CD4-positive, alpha-beta T cell (primary cell): ENCODE measurements at regions of chr2 and their contacts with region 1.

Region 1: DNA sequence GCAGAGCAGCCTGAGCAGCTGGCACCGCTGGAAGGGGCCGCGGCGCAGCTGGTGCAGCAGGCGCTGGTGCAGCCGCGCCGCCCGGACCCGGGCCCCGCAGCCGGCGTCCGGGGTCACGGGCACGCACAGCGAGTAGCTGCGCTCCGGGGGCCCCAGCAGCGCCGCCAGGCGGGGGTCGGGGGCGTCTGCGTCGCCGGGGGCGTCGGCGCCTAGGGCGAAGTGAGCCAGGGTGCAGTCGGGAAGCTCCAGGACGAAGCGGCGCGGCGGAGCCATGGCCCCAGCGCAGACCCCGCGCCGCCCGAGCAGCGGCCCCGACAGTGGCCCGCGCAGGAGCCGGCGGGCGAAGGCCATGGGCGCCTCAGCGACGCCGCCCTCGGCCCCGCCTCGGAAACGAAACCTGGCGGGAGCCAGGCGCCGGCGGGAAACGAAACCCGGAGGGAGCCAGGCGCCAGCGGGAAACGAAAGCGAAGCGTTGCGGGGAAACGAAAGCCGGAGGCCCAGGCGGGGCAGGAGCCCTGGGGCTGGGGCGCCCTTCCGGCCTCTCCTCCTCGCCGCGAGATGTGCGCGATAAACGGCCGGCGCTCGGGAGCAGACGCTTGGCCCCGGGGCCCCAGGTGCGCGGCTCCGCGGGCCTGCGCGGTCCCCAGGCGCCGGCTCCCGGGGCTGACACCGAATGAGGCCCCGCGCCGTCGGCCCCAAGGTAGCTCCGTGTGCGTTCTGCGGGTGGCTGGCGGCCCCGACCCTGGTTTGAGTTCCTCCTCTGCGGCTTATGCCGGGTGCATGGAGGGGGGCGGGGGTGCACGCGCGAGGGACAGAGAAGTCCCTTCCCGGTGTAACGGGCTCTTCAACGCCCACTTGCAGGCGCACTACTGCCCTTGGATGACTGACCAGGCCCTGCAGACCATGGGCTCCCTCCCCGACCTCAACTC is at the start of gene CMPK2:
- DNase-seq: peak; percentile 60 to 97 (median 74)
- ATAC-seq: peak; percentile 74
- H3K4me3 ChIP-seq: peak within 1 kb of the TSS; percentile 93
- H3K4me3 Mint-ChIP-seq: peak within 1 kb of the TSS; percentile 96
- H3K27ac ChIP-seq: peak within 1 kb of the TSS in 1 of 2 donors; percentile 46
- H3K27ac Mint-ChIP-seq: peak within 1 kb of the TSS; percentile 86
- H3K4me1 ChIP-seq: peaks cover 19% of the 10 kb centered on the region
- H3K4me1 Mint-ChIP-seq: peaks cover 20% of the 10 kb centered on the region
- H3K27me3 ChIP-seq: no peaks in the 10 kb centered on the region
- H3K27me3 Mint-ChIP-seq: no peaks in the 10 kb centered on the region
- CTCF ChIP-seq: no peak
- total RNA-seq, gene CMPK2: 6.5 to 7.6 TPM

Region 2: GRCh38 chr2:6826081-6826913 is 39.3 kb before region 1 on chr2:
- CTCF ChIA-PET with region 1: no interaction called
- POLR2A ChIA-PET with region 1: no interaction called
- intact Hi-C with region 1: loop called (anchors 1 to 5 kb)
- DNase-seq: peak; percentile 8 to 78 (median 37)
- ATAC-seq: peak; percentile 73
- H3K4me3 ChIP-seq: no peak overlapping the region
- H3K4me3 Mint-ChIP-seq: no peak overlapping the region
- H3K27ac ChIP-seq: no peak overlapping the region
- H3K27ac Mint-ChIP-seq: no peak overlapping the region
- H3K4me1 ChIP-seq: no peaks in the 10 kb centered on the region
- H3K4me1 Mint-ChIP-seq: peaks cover 17% of the 10 kb centered on the region
- H3K27me3 ChIP-seq: no peaks in the 10 kb centered on the region
- H3K27me3 Mint-ChIP-seq: no peaks in the 10 kb centered on the region
- CTCF ChIP-seq: peak; percentile 86

Region 3: GRCh38 chr2:6877402-6878304 is 12.0 kb after region 1 on chr2 and contains the start of gene RSAD2:
- CTCF ChIA-PET with region 1: interaction called, 38 read pairs
- POLR2A ChIA-PET with region 1: interaction called, 132 read pairs
- intact Hi-C with region 1: loop called in 1 of 2 experiments (anchors 1 kb)
- DNase-seq: peak in 9 of 14 experiments; percentile 8 to 81 (median 62)
- ATAC-seq: peak; percentile 82
- H3K4me3 ChIP-seq: peak within 1 kb of the TSS; percentile 56
- H3K4me3 Mint-ChIP-seq: peak within 1 kb of the TSS; percentile 90
- H3K27ac ChIP-seq: peak within 1 kb of the TSS; percentile 18 to 31
- H3K27ac Mint-ChIP-seq: peak within 1 kb of the TSS; percentile 92
- H3K4me1 ChIP-seq: peaks cover 25% of the 10 kb centered on the region
- H3K4me1 Mint-ChIP-seq: peaks cover 78% of the 10 kb centered on the region
- H3K27me3 ChIP-seq: no peaks in the 10 kb centered on the region
- H3K27me3 Mint-ChIP-seq: no peaks in the 10 kb centered on the region
- CTCF ChIP-seq: no peak
- total RNA-seq, gene RSAD2: 3.9 to 4.6 TPM

Region 4: DNA sequence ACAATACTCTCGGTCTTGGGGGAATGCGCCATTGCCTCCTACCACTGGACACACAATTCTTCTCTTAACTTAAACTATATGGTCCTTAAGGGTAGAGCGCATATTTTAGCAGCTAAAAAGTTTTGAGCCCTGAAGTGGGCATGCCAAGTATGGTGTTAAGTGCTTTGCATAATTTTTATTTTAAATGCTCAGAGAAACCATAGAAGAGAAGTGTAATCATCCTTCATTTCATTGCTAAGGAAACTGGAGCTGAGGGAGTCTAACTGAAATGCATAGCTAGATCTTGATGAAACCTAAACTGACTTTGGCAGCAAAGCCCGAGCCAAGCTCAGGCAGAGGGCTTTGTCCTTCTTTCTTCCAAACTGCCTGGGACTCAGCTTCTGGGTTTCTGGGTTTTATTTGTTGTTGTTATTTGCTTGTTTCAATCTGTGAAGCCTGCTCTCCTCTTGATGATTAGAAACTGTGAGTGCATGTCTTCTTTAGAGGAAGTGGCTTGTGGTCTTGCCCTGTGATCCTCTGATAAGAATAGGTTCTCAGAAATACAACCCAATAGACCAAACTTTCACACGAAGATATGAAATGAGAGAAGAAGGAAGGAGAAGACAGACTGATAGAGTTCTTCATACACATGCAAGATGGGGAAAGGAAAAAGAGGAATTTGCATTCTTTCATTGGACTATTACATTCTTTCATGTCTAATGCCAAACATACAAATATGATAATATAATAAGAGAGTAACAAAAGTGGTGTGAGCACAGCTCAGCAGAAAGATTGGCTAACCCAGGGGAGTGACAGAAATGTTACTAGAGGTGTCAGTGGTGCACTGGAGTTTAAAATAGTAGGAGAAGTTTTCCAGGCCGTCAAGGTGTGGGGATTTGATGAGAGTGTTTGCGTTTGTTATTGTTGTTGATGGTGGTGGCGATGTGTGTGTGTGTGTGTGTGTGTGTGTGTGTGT is 44.1 kb after region 1 on chr2:
- CTCF ChIA-PET with region 1: interaction called, 5 read pairs
- POLR2A ChIA-PET with region 1: interaction called, 18 read pairs
- intact Hi-C with region 1: no loop called
- DNase-seq: peak in 6 of 14 experiments; percentile 15 to 90 (median 63)
- ATAC-seq: peak; percentile 64
- H3K4me3 ChIP-seq: peak overlapping the region; percentile 23
- H3K4me3 Mint-ChIP-seq: peak overlapping the region; percentile 62
- H3K27ac ChIP-seq: peak overlapping the region; percentile 38 to 63
- H3K27ac Mint-ChIP-seq: peak overlapping the region; percentile 85
- H3K4me1 ChIP-seq: peaks cover 82% of the 10 kb centered on the region
- H3K4me1 Mint-ChIP-seq: peaks cover 86% of the 10 kb centered on the region
- H3K27me3 ChIP-seq: no peaks in the 10 kb centered on the region
- H3K27me3 Mint-ChIP-seq: no peaks in the 10 kb centered on the region
- CTCF ChIP-seq: no peak

Region 5: GRCh38 chr2:6917071-6917760 is 51.6 kb after region 1 on chr2 and contains the start of gene RNF144A:
- CTCF ChIA-PET with region 1: interaction called, 6 read pairs
- POLR2A ChIA-PET with region 1: interaction called, 11 read pairs
- intact Hi-C with region 1: no loop called
- DNase-seq: peak; percentile 56 to 91 (median 69)
- ATAC-seq: peak; percentile 69
- H3K4me3 ChIP-seq: peak within 1 kb of the TSS; percentile 68
- H3K4me3 Mint-ChIP-seq: peak within 1 kb of the TSS; percentile 85
- H3K27ac ChIP-seq: peak within 1 kb of the TSS in 1 of 2 donors; percentile 29
- H3K27ac Mint-ChIP-seq: peak within 1 kb of the TSS; percentile 85
- H3K4me1 ChIP-seq: peaks cover 74% of the 10 kb centered on the region
- H3K4me1 Mint-ChIP-seq: peaks cover 82% of the 10 kb centered on the region
- H3K27me3 ChIP-seq: no peaks in the 10 kb centered on the region
- H3K27me3 Mint-ChIP-seq: no peaks in the 10 kb centered on the region
- CTCF ChIP-seq: peak; percentile 60
- total RNA-seq, gene RNF144A: 39.0 to 40.1 TPM